Left cardiac atrium (tissue), 4 donors: ENCODE measurements at regions of chr15 and their contacts with region 1.

Region 1: DNA sequence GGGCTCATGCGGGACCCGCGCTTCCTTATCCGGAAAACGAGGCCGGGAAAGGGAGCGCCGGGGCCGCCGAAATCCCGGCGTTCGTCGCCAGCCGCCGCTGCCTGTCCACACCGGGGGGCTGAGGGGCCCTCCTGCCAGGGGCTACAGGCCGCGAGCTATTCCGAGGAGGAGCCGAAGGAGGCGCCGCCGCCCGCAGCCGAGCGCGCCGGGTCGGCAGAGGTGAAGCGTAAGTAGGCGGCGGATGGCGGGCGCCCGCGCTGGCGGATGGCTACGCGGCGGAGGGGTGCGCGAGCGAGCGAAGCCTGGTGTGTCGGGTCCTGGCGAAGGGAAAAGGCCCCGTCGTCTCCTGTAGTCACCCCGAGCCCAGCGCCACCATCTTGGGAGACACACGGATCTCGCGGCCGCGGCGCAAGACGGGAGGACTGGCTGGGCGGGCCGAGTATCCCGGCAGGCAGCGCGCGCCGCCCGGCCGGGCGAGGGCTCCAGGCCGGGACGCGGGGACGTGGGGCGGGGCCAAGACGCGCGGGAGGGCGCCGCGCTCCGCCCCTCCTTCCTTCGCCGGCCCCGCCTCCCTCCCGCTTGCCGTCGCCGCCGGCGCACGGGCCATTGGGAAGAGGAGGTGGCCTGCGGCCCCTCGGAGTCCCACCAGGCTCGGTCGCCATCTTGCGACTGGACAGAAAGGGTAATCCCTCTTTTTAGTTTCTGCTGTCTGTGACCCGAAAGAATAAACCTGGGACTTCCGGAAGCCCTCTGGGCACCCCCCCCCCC is at the start of gene UBE3A:
- DNase-seq: peak; percentile 92
- ATAC-seq: peak; percentile 98 to 99
- total RNA-seq, gene UBE3A: 91.5 to 105 TPM

Region 2: DNA sequence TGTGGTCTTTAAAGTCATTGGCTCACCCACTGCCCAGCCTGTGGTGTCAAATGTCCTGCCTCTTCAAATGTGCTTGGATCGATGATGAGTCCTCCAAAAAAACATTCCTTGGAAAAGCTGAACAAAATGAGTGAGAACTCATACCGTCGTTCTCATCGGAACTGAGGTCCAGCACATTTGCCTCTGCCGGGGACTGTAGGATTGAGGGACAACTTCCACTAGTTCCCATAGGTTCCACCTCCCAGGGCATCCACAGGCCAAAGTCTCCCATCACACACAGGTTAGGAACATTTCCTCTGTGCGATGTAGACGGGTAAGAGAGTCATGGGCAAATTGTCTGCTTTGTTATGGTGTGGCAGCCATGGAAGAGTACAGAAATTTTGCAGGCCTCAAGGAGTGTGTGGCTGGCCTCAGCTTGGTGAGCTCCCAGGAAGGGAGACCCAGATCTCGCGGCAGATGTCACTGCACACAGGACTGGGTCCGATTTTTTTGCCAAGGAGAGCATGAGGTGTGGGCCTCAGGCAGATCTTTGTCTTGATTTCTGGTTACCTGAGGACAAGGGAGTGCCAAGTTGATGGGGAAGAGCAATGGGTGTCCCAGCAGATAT is 368.3 kb before region 1 on chr15:
- intact Hi-C with region 1: no loop called
- DNase-seq: no peak
- ATAC-seq: no peak

Region 3: DNA sequence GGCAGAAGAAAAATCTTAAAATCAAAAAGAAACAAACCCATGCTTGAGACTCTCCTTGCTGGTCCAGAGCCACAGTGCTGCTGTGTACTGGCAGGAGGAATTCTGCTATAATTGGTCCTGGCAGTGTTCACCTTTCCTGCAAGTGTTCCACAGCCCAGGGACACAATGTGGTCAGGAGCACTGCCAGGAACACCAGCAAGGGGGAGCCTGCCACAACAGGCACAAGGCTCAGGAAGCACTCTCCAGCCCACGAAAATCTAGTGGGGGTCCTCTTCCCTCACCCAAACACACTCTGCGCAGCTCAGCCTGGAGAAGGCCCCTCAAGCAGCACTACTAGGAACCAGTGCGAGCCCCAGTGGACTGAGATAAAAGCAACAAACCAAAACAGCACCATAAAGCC is 92.8 kb before region 1 on chr15:
- intact Hi-C with region 1: loop called in 1 of 2 experiments (anchors 5 kb)
- DNase-seq: peak; percentile 29
- ATAC-seq: peak; percentile 92 to 97

Region 4: DNA sequence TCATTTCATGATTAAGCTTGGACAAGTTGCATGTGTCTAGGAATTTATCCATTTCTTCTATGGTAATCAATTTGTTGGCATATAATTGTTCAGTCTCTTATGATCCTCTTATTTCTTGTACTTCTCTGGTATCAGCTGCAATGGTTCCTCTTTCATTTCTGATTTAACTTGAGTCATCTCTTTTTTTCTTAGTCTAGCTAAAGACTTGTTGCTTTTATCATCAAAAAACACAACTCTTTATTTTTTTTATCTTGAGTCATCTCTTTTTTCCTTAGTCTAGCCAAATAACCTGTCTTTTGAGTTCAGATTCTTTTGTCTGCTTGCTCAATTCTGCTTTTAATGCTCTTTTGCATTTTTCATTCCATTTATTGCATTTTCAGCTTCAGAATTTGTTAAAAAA is 37.3 kb before region 1 on chr15:
- intact Hi-C with region 1: no loop called
- DNase-seq: no peak
- ATAC-seq: no peak

Region 5: GRCh38 chr15:25811481-25811906 is 372.7 kb after region 1 on chr15:
- intact Hi-C with region 1: no loop called
- DNase-seq: no peak
- ATAC-seq: no peak